ENCODE measurements at regions of chr13 and their contacts with region 1.

Region 1: DNA sequence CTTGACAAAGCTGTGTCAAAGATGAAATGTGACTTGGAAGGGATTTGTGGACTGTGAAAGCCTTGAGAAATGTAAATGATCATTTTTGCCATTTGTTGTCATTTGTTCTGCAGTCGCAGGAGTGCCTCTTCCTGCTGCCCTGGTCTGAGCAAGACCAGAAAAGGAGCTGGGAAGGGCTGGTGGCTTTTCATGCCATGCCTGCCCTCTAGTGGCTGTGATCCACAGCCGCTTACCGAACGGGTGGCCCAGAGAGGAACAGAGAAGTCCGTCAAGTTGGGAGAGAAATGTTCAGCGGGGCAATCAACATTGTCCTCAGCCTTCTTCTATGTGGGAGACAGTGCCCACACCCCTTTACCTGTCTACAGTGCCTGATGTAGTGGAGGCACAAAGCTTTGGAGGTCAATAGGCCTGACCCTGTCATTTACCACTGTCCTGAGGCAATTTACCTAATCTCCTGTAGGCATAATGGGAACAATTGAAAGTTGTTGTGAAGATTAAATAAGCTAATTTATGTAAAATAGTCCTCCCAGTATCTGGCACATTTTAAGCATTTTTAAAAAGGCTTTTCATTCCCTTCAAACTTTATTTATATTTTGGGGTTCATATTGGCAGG is 224.4 kb downstream of the B3GLCT start:
- DNase-seq: peak; percentile 71 to 83
- H3K4me3 ChIP-seq: no peak overlapping the region
- H3K27ac ChIP-seq: no peak overlapping the region
- H3K4me1 ChIP-seq: no peaks in the 10 kb centered on the region
- H3K27me3 ChIP-seq: no peaks in the 10 kb centered on the region
- CTCF ChIP-seq: peak; percentile 61 to 90 (median 76)
- POLR2A ChIP-seq: no peak

Region 2: GRCh38 chr13:31236211-31236786 is 187.9 kb before region 1 on chr13:
- intact Hi-C with region 1: loop called (anchors 5 kb)
- DNase-seq: no peak
- H3K4me3 ChIP-seq: no peak overlapping the region
- H3K27ac ChIP-seq: no peak overlapping the region
- H3K4me1 ChIP-seq: no peaks in the 10 kb centered on the region
- H3K27me3 ChIP-seq: no peaks in the 10 kb centered on the region
- CTCF ChIP-seq: peak in 5 of 6 experiments; percentile 27 to 78 (median 70)
- POLR2A ChIP-seq: no peak

Region 3: DNA sequence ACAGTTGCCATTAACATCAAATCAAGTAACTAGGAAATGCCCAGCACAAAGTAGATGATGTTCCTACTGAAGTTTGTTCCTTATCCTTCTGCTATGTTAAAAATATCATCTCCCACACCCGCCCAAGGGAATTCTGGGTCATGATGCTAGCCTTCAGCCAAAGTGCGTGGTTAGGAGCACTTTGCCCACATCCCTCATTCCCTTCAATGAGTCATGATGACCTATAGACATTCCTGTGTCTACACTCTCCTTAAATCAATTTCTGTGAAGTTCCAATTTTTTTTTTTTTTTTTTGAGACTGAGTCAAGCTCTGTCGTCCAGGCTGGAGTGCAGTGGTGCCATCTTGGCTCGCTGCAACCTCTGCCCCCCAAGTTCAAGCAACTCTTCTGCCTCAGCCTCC is 332.1 kb after region 1 on chr13:
- intact Hi-C with region 1: no loop called
- DNase-seq: no peak
- H3K4me3 ChIP-seq: no peak overlapping the region
- H3K27ac ChIP-seq: no peak overlapping the region
- H3K4me1 ChIP-seq: peaks cover 0 to 5% of the 10 kb centered on the region in 2 donors
- H3K27me3 ChIP-seq: no peaks in the 10 kb centered on the region
- CTCF ChIP-seq: no peak
- POLR2A ChIP-seq: no peak

Region 4: GRCh38 chr13:31767171-31767900 is 343.1 kb after region 1 on chr13:
- intact Hi-C with region 1: no loop called
- DNase-seq: no peak
- H3K4me3 ChIP-seq: no peak overlapping the region
- H3K27ac ChIP-seq: peak overlapping the region in 2 of 3 donors; percentile 0 to 61
- H3K4me1 ChIP-seq: peaks cover 33 to 41% of the 10 kb centered on the region in 2 donors
- H3K27me3 ChIP-seq: no peaks in the 10 kb centered on the region
- CTCF ChIP-seq: no peak
- POLR2A ChIP-seq: no peak

Region 5: DNA sequence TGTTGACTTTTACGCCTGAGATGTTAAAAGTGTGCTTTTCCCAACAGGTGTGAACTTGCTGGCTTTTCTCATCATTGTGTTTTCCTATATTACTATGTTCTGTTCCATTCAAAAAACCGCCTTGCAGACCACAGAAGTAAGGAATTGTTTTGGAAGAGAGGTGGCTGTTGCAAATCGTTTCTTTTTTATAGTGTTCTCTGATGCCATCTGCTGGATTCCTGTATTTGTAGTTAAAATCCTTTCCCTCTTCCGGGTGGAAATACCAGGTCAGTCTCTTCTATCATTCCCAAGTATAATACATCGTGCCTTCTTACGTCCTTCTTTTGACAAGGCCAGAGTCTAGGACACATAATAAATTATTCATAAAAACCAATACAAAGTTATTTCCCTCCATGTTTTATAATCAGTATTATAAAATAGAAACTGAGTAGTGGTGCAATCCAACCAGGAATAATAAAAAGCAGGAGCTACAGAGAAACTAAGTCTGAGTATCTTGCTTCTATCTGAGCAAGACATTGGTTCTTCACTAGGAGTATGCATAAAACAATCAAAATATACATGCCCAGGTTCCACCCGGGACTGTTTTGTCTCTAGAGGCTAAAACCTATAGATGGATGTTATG is 373.0 kb after region 1 on chr13:
- intact Hi-C with region 1: loop called (anchors 5 kb)
- DNase-seq: no peak
- H3K4me3 ChIP-seq: no peak overlapping the region
- H3K27ac ChIP-seq: no peak overlapping the region
- H3K4me1 ChIP-seq: no peaks in the 10 kb centered on the region
- H3K27me3 ChIP-seq: no peaks in the 10 kb centered on the region
- CTCF ChIP-seq: peak in 4 of 6 experiments; percentile 9 to 68 (median 58)
- POLR2A ChIP-seq: no peak